ENCODE measurements at regions of chr9 and their contacts with region 1.

Region 1: DNA sequence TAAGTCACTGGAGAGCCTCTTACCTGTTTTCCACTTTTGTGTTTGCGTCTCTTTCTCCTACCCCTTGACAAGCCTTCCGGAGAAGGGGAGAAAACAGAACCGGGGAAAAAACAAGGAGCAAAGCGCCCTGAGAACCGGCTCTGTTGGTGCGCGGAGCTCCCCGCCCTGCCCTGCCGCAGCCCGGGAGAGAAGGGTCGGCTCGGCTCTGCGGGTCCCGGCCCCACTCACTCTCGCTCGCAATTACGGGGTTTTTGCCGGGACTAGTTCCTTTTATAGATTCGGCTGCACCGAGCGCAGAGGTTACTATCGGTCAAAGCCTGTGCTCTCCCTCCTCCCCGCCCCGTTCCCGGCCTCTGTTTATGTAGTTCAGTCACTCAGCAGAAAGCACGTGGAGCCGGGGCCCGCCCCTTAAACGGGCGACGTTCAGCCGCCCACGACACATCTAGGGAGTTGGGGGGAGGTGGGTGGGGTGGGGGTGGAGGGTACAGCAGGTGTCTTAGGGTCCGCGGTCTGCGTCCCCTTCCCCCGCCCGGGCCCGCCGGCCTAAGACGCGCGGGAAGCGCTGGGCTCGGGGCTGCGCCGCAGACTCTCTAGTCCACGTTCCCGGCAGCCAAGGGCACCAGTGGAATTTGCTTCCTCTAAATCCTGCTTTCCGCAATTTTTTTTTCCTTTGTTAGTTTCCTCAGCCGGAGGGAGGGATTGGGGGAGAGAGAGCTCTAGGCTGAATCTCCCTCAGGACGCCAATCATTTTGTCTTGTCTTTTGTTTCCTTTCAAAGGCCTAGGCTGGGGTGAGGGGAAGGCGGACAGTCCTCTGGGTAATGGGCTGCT is at the start of gene ABCA1:
- DNase-seq: peak; percentile 69
- H3K4me3 ChIP-seq: peak within 1 kb of the TSS; percentile 65 to 86 (median 82)
- H3K27ac ChIP-seq: peak within 1 kb of the TSS; percentile 45
- H3K4me1 ChIP-seq: peaks cover 8% of the 10 kb centered on the region
- H3K27me3 ChIP-seq: no peaks in the 10 kb centered on the region
- CTCF ChIP-seq: no peak
- total RNA-seq, gene ABCA1: 22.5 to 48.2 TPM

Region 2: GRCh38 chr9:104856413-104856941 is 71.6 kb before region 1 on chr9:
- CTCF ChIA-PET with region 1: interaction called, 23 read pairs
- dilution Hi-C with region 1: no loop called
- in situ Hi-C with region 1: no loop called
- intact Hi-C with region 1: no loop called
- DNase-seq: no peak
- H3K4me3 ChIP-seq: no peak overlapping the region
- H3K27ac ChIP-seq: no peak overlapping the region
- H3K4me1 ChIP-seq: peaks cover 15% of the 10 kb centered on the region
- H3K27me3 ChIP-seq: no peaks in the 10 kb centered on the region
- CTCF ChIP-seq: no peak

Region 3: DNA sequence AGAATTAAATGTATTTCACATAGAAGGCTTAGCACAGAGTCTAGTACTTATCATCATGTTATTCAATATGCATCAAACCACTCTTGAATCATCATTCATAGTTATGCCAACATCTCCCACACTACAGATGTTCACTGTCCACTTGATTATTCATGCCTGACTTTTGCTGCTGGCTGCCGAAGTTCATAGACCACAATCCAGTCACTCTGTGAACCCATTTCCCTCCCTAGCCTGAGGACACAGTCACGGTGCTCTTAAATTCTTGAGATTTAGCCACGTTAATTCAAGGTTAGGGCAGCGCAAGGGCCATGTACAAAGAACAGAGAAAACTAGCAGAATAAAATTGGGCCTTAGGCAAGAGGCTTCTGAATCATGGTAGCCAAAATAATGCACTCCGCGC is 32.6 kb before region 1 on chr9:
- CTCF ChIA-PET with region 1: no interaction called
- dilution Hi-C with region 1: no loop called
- in situ Hi-C with region 1: no loop called
- intact Hi-C with region 1: loop called (anchors 2 kb)
- DNase-seq: peak; percentile 91
- H3K4me3 ChIP-seq: no peak overlapping the region
- H3K27ac ChIP-seq: peak overlapping the region; percentile 46
- H3K4me1 ChIP-seq: peaks cover 47% of the 10 kb centered on the region
- H3K27me3 ChIP-seq: no peaks in the 10 kb centered on the region
- CTCF ChIP-seq: no peak

Region 4: DNA sequence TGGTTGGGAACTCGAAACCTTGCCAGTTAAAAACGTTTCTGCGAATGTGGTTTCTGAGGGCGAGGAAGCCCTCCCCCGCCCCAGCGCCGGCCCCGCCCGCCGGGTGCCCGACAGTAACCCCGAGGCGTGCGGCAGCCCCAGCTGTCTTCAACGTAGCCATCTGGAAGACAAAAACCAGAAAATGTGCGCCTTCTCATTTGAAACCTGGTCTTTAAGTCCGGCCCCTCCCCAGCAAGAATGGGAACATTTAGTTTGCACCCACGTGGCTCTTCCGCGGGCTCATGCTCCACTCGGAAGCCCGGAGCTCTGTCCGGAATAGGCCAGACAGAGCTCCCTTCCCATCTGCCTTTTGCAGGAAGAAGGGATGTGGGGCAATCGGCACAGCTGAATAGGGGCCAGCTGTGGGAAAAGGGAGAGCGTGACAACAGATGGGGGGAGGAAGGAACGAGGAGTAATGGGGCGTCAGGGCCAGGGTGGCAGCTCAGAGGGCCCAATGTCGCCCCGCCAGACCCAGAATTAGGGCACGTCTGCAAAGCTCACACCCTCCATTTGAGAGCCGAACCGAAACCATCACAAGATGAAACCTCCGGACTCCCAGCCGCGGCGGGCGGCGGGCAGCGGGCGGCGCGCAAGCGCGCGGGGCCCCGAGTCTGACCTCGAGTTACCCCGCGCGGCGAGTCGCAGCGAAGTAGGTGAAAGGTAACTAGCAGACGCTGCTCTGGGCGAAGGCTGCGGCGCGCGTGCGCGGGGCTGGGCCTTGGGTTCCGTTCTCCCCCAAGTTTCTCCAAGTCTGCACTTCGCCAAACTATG is 63.2 kb after region 1 on chr9:
- CTCF ChIA-PET with region 1: no interaction called
- dilution Hi-C with region 1: no loop called
- in situ Hi-C with region 1: no loop called
- intact Hi-C with region 1: loop called (anchors 1 kb)
- DNase-seq: peak; percentile 78
- H3K4me3 ChIP-seq: peak overlapping the region; percentile 52 to 61 (median 60)
- H3K27ac ChIP-seq: peak overlapping the region; percentile 48
- H3K4me1 ChIP-seq: peaks cover 13% of the 10 kb centered on the region
- H3K27me3 ChIP-seq: no peaks in the 10 kb centered on the region
- CTCF ChIP-seq: no peak

Region 5: DNA sequence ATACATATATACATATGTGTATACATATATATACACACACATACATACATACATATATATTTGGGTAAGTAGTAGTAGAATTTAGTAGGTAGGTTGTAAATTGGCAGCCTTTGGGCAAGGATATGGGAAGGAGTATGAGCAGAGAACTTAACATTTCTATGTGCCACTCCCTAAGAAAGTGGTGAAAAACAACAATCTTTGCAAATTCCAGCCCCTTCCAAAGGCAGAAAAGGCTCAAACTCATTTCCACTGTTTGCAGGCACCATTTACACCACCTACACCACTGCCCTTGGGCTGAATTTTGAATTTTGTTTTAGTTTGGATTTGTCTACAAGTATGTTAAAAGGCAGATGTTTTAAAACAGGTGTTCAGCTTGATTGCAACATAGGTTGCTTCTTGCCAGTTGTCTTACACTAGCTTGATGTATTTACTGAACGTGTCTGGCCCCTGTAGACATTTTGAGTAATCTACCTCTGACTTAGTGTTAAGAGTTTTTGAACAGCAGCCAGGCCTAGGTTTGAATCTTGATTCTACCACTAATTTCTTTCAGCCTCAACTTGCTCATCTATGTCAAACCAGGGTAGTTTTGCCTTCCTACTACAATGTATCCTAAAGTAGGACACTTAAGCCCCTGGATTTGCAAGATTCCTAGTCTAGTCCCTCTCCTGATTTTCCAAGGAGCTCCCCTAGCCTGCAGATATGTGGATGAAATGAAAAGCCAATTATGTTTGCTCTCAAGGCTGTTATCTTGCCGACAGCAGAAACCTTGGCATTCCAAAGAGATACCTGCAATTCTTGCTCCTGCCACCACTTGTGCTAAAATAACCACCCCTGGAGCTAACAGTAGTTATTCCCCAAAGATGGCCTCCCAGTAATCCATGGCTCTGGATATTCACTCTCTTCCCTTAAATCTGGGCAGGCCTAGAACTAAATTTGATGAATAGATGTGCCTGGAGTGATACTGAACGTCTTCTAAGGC is 160.1 kb after region 1 on chr9:
- CTCF ChIA-PET with region 1: no interaction called
- dilution Hi-C with region 1: no loop called
- in situ Hi-C with region 1: no loop called
- intact Hi-C with region 1: loop called (anchors 1 kb)
- DNase-seq: no peak
- H3K4me3 ChIP-seq: no peak overlapping the region
- H3K27ac ChIP-seq: no peak overlapping the region
- H3K4me1 ChIP-seq: no peaks in the 10 kb centered on the region
- H3K27me3 ChIP-seq: no peaks in the 10 kb centered on the region
- CTCF ChIP-seq: peak in 1 of 2 donors; percentile 7

Region 6: GRCh38 chr9:105355781-105356180 is 427.7 kb after region 1 on chr9:
- CTCF ChIA-PET with region 1: no interaction called
- dilution Hi-C with region 1: no loop called
- in situ Hi-C with region 1: no loop called
- intact Hi-C with region 1: loop called (anchors 5 kb)
- DNase-seq: peak; percentile 60
- H3K4me3 ChIP-seq: no peak overlapping the region
- H3K27ac ChIP-seq: no peak overlapping the region
- H3K4me1 ChIP-seq: no peaks in the 10 kb centered on the region
- H3K27me3 ChIP-seq: no peaks in the 10 kb centered on the region
- CTCF ChIP-seq: peak in 1 of 2 donors; percentile 18